PC-3 (cell line): ENCODE measurements at regions of chr17 and their contacts with region 1.

Region 1: GRCh38 chr17:17752089-17752820 is 71.0 kb downstream of the RAI1 start:
- DNase-seq: peak; percentile 95
- ATAC-seq: peak; percentile 97
- H3K4me3 ChIP-seq: peak overlapping the region; percentile 67
- H3K27ac ChIP-seq: peak overlapping the region; percentile 37
- H3K4me1 ChIP-seq: peaks cover 16% of the 10 kb centered on the region
- H3K27me3 ChIP-seq: no peaks in the 10 kb centered on the region
- CTCF ChIP-seq: peak; percentile 54; the same call in 1 of the 2 replicates

Region 2: DNA sequence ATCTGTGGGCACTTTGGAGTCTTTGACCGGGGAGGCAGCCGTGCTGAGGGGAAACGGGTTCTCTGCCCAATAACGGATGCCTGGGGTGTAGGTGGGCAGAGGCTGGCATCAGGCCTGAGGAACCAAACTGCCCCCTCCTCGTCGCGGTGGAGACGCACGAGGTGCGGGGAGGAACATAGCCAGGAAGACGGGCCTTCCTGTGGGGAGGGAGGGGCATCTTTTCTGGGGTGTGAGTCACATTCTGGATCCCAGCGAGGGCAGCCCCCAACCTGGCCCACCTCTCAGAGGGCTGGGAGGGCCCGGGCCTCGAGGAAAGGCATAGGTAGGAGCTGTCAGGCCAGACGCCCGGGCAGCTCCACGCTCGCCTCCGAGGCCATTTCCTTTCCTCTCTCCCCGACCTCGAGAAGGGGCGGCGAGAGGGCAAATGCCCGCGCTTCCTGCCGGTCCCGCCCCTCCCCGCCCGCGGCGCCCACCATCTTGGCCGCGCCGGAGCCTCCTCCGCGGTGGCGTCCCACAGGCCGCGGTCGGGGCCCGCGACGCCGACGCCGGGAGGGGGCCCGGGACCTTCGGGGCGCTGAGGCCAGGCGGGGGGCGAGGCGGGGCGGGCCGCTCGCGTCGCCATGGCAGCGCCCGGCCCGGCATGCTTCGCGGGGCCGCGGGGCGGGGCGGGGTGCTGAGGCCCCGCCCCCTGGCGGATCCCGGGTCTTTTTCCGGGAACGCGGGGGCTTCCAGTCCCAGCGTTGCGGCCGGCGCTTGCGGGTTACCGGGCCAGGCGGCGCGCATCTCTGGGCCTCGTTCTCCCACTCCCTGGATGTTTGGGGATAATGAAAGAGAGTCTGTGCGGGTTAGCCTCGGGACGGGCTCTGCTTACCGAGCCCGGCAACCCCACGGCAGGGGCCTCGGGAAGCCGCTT is 57.8 kb before region 1 on chr17:
- CTCF ChIA-PET with region 1: no interaction called
- POLR2A ChIA-PET with region 1: no interaction called
- intact Hi-C with region 1: loop called (anchors 5 kb)
- DNase-seq: peak; percentile 78
- ATAC-seq: peak; percentile 49
- H3K4me3 ChIP-seq: peak overlapping the region; percentile 86
- H3K27ac ChIP-seq: peak overlapping the region; percentile 96
- H3K4me1 ChIP-seq: peaks cover 66% of the 10 kb centered on the region
- H3K27me3 ChIP-seq: no peaks in the 10 kb centered on the region
- CTCF ChIP-seq: no peak